ENCODE measurements at regions of chr15 and their contacts with region 1.

Region 1: GRCh38 chr15:57611938-57612337 is 20.2 kb downstream of the MYZAP start:
- DNase-seq: peak; percentile 35 to 62
- ATAC-seq: peak; percentile 63 to 75
- H3K4me3 ChIP-seq: no peak overlapping the region
- H3K27ac ChIP-seq: peak overlapping the region in 1 of 2 experiments; percentile 78; a peak in 4 of 6 replicates
- H3K4me1 ChIP-seq: peaks cover 62% of the 10 kb centered on the region
- CTCF ChIP-seq: peak; percentile 64
- EP300 ChIP-seq: no peak
- POLR2A ChIP-seq: no peak
- RAD21 ChIP-seq: peak; percentile 77 to 84

Region 2: GRCh38 chr15:56950979-56951378 is 661.0 kb before region 1 on chr15:
- CTCF ChIA-PET with region 1: no interaction called
- POLR2A ChIA-PET with region 1: no interaction called
- DNase-seq: no peak
- ATAC-seq: no peak
- H3K4me3 ChIP-seq: no peak overlapping the region
- H3K27ac ChIP-seq: no peak overlapping the region
- H3K4me1 ChIP-seq: peaks cover 10% of the 10 kb centered on the region; the same call in 1 of the 3 replicates
- CTCF ChIP-seq: no peak
- EP300 ChIP-seq: no peak
- POLR2A ChIP-seq: no peak
- RAD21 ChIP-seq: no peak

Region 3: DNA sequence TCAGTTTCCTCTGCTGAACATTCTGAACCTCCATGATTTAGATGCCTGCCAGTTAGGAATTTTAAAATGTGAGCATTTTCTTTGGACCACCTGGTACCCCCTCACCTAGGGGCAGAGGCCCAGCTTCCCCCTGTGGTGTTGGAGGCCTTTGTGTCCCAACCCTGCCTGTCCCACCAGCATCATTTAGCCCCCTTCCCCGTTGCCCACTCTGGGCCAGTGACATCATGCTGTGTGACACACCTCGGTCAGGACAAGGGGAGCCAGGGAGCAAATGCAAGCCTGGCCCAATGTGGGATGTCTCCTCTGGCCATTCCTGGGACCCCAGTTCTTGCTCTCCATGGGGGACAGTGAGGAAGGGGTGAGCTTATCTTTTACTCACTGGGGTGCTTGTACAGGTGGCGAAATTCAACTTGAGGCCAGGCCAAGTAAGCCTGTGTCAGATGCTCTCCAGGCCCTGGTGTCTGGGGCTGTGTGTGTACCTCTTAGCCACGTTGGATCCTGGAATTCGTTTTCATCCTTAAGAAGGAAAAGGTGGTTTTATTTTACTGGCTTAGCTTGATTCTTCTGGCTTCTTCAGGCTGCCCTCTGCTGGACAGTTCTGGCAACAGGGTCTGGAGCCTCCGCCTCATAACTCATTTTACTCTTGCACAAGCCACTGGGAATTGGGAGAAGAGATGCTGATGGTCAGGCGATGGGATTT is 70.0 kb before region 1 on chr15:
- CTCF ChIA-PET with region 1: interaction called, 16 read pairs
- POLR2A ChIA-PET with region 1: no interaction called
- DNase-seq: peak; percentile 74 to 77
- ATAC-seq: peak; percentile 68 to 88
- H3K4me3 ChIP-seq: no peak overlapping the region
- H3K27ac ChIP-seq: no peak overlapping the region
- H3K4me1 ChIP-seq: peaks cover 4% of the 10 kb centered on the region; the same call in 2 of the 3 replicates
- CTCF ChIP-seq: peak; percentile 90
- EP300 ChIP-seq: no peak
- POLR2A ChIP-seq: no peak
- RAD21 ChIP-seq: peak; percentile 75 to 84

Region 4: GRCh38 chr15:57570994-57571393 is 40.9 kb before region 1 on chr15:
- CTCF ChIA-PET with region 1: interaction called, 286 read pairs
- POLR2A ChIA-PET with region 1: no interaction called
- DNase-seq: peak in 1 of 2 experiments; percentile 51
- ATAC-seq: peak; percentile 76 to 85
- H3K4me3 ChIP-seq: no peak overlapping the region
- H3K27ac ChIP-seq: peak overlapping the region; percentile 75 to 76
- H3K4me1 ChIP-seq: peaks cover 15% of the 10 kb centered on the region
- CTCF ChIP-seq: no peak
- EP300 ChIP-seq: no peak
- POLR2A ChIP-seq: no peak
- RAD21 ChIP-seq: no peak

Region 5: GRCh38 chr15:57591646-57592367 is 20.1 kb before region 1 on chr15 and contains the start of gene MYZAP:
- CTCF ChIA-PET with region 1: interaction called, 45 read pairs
- POLR2A ChIA-PET with region 1: no interaction called
- DNase-seq: peak in 1 of 2 experiments; percentile 84
- ATAC-seq: peak; percentile 82 to 94
- H3K4me3 ChIP-seq: peak within 1 kb of the TSS; percentile 66
- H3K27ac ChIP-seq: peak within 1 kb of the TSS; percentile 54 to 86
- H3K4me1 ChIP-seq: peaks cover 4% of the 10 kb centered on the region; the same call in 1 of the 3 replicates
- CTCF ChIP-seq: no peak
- EP300 ChIP-seq: no peak
- POLR2A ChIP-seq: no peak
- RAD21 ChIP-seq: no peak
- polyA plus RNA-seq, gene MYZAP: 1.1 and 1.2 TPM in 2 replicates

Region 6: GRCh38 chr15:57596978-57597377 is 15.0 kb before region 1 on chr15:
- CTCF ChIA-PET with region 1: interaction called, 45 read pairs
- POLR2A ChIA-PET with region 1: interaction called, 3 read pairs
- DNase-seq: no peak
- ATAC-seq: no peak
- H3K4me3 ChIP-seq: no peak overlapping the region
- H3K27ac ChIP-seq: no peak overlapping the region
- H3K4me1 ChIP-seq: peaks cover 5% of the 10 kb centered on the region; the same call in 1 of the 3 replicates
- CTCF ChIP-seq: no peak
- EP300 ChIP-seq: no peak
- POLR2A ChIP-seq: no peak
- RAD21 ChIP-seq: no peak

Region 7: DNA sequence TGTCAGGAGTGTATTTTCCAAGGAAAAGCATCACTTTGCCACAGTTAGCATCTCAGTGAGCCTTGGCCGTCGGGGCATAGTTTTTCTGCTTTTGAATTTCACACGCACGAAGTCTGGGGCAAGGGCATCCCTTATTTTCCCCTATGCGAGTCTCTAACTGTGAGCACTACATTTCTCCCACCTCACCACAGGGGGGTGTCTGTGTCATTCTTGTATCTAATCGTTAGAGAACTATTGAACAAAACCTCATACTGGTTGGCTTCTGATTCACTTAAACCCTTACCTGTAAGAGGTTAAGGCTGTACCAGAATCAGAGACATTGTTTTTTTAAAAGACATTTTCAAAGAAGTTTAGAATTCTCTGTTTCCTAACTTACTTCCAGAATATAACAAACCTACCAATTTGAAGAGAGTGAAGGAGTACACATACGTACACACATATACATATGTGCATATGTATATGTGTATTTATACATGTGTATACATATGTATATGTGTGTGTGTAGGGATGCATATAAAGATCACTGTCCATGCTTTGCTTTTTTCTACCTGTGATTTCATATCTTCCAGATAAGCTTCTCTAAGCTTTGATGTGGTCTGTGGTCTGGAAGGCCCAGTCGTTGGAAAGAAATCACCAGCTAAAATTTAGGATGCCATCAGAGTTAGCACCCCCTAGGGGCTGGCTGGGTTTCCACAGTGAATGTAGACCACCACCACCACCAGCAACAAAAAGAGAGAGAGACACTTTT is 29.2 kb after region 1 on chr15:
- CTCF ChIA-PET with region 1: interaction called, 18 read pairs
- POLR2A ChIA-PET with region 1: no interaction called
- DNase-seq: peak; percentile 40 to 63
- ATAC-seq: peak; percentile 87 to 92
- H3K4me3 ChIP-seq: no peak overlapping the region
- H3K27ac ChIP-seq: no peak overlapping the region
- H3K4me1 ChIP-seq: no peaks in the 10 kb centered on the region
- CTCF ChIP-seq: peak; percentile 38; the same call in 2 of the 3 replicates
- EP300 ChIP-seq: no peak
- POLR2A ChIP-seq: no peak
- RAD21 ChIP-seq: peak; percentile 43 to 50; a peak in 3 of 5 replicates

Measured in A549 (cell line).